ENCODE measurements at regions of chr6 and their contacts with region 1.

Region 1: GRCh38 chr6:87701676-87702588 is at the start of gene AKIRIN2:
- DNase-seq: peak; percentile 93 to 99 (median 98)
- H3K4me3 ChIP-seq: peak within 1 kb of the TSS; percentile 82
- H3K4me3 Mint-ChIP-seq: peak within 1 kb of the TSS; percentile 93 to 99 (median 97)
- H3K27ac ChIP-seq: peak within 1 kb of the TSS; percentile 91
- H3K27ac Mint-ChIP-seq: peak within 1 kb of the TSS; percentile 88 to 98 (median 96)
- H3K4me1 ChIP-seq: peaks cover 11% of the 10 kb centered on the region
- H3K4me1 Mint-ChIP-seq: peaks cover 45 to 56% (median 54%) of the 10 kb centered on the region in 3 donors
- H3K27me3 ChIP-seq: no peaks in the 10 kb centered on the region
- H3K27me3 Mint-ChIP-seq: peaks cover 0 to 4% of the 10 kb centered on the region in 2 donors
- total RNA-seq, gene AKIRIN2: 47.3 to 49.3 TPM

Region 2: DNA sequence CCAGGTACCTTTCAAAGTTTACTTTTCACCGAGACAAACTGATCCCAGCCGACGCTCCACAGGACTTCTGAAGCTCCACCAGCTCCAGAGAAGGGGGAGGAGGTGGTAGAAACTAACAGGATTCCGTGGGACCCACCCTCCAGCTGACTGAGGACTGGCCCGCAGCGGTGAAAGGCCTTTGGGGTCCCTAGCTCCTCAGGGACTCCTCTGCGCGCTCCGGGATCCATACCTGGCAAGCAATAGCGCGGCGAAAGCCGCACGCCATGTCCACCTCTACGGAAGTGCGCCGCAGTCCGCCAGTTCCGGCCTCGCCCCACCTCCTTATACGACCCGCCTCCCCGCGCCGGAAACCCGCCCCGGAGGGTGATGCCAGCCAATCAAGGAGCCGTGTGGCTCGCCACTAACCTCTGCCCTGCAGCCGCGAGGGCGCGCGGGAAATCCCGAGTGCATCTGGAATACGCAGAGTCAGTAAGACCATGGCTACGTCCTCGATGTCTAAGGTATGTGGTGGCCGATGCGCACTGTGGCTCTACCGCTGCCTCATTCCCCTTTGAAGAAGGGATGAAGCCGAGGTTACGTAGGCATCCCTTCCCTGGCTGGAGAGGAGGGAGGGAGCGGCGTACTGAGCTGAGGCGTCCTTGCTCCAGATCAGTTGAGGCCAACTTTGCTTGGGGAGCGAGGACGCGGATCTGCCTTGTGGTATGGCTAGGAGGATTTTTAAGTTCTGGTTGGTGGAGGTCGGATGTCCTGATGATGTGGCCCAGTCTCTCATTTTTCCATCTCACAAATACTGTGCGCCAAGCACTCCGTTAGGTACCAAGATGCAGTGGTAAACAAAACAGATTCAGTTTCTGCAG is 112.0 kb before region 1 on chr6 and contains the starts of genes ORC3 and RARS2:
- CTCF ChIA-PET with region 1: interaction called, 3 read pairs
- POLR2A ChIA-PET with region 1: interaction called, 21 read pairs
- DNase-seq: peak; percentile 90 to 95 (median 93)
- H3K4me3 ChIP-seq: peak within 1 kb of the TSS; percentile 98
- H3K4me3 Mint-ChIP-seq: peak within 1 kb of the TSS; percentile 87 to 98 (median 92)
- H3K27ac ChIP-seq: peak within 1 kb of the TSS; percentile 90
- H3K27ac Mint-ChIP-seq: peak within 1 kb of the TSS; percentile 80 to 99 (median 94)
- H3K4me1 ChIP-seq: peaks cover 39% of the 10 kb centered on the region
- H3K4me1 Mint-ChIP-seq: peaks cover 57 to 82% (median 77%) of the 10 kb centered on the region in 3 donors
- H3K27me3 ChIP-seq: no peaks in the 10 kb centered on the region
- H3K27me3 Mint-ChIP-seq: no peaks in the 10 kb centered on the region
- total RNA-seq, gene ORC3: 31.1 to 33.5 TPM
- total RNA-seq, gene RARS2: 19.2 to 20.6 TPM

Region 3: DNA sequence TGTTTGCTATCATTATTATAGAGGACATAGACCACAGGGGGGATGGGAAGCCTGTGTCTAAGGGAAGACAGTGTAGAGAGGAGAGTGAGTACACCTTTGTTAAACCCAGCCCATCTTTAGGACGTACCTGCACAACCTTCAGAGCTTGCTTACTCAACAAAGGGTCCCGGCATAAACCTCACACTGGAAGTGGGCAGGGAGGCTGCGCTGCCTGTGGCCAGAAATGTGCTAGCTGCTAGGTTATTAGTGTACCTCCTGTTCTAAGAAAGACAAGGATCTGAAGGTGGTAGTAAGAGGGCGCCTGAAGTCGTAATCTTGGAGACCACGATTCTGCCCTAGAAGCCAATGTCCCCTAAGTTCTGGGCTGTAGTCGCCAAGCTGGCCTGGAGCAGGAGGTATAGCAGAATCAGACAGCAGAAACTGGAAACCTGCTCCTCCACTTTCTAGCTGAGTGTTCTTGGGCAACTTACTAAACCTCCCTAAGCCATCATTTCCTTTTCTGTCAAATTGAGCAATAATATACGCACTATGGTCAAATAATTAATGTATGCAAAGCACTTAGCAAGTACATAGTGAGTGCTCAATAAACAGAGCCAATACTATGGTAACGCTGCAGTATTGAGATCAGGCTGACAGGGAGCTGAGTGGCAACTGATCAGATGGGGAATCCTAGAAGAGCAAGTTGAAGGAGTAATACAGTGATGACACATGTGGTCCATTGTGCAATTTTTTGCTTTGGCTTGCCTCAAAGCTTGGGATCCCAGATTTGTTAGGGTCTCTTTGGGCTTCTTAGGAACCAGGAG is 16.9 kb after region 1 on chr6:
- CTCF ChIA-PET with region 1: interaction called, 6 read pairs
- POLR2A ChIA-PET with region 1: interaction called, 15 read pairs
- DNase-seq: no peak
- H3K4me3 ChIP-seq: no peak overlapping the region
- H3K4me3 Mint-ChIP-seq: peak overlapping the region in 6 of 7 donors; percentile 20 to 78 (median 54)
- H3K27ac ChIP-seq: no peak overlapping the region
- H3K27ac Mint-ChIP-seq: peak overlapping the region; percentile 17 to 90 (median 83)
- H3K4me1 ChIP-seq: peaks cover 12% of the 10 kb centered on the region
- H3K4me1 Mint-ChIP-seq: peaks cover 31 to 47% (median 46%) of the 10 kb centered on the region in 3 donors
- H3K27me3 ChIP-seq: no peaks in the 10 kb centered on the region
- H3K27me3 Mint-ChIP-seq: no peaks in the 10 kb centered on the region

Region 4: GRCh38 chr6:87742106-87742505 is 40.2 kb after region 1 on chr6:
- CTCF ChIA-PET with region 1: interaction called, 4 read pairs
- POLR2A ChIA-PET with region 1: interaction called, 17 read pairs
- DNase-seq: peak; percentile 11 to 82 (median 50)
- H3K4me3 ChIP-seq: no peak overlapping the region
- H3K4me3 Mint-ChIP-seq: peak overlapping the region in 5 of 7 donors; percentile 2 to 50 (median 42)
- H3K27ac ChIP-seq: no peak overlapping the region
- H3K27ac Mint-ChIP-seq: peak overlapping the region; percentile 76 to 94 (median 92)
- H3K4me1 ChIP-seq: peaks cover 22% of the 10 kb centered on the region
- H3K4me1 Mint-ChIP-seq: peaks cover 42 to 54% (median 52%) of the 10 kb centered on the region in 3 donors
- H3K27me3 ChIP-seq: no peaks in the 10 kb centered on the region
- H3K27me3 Mint-ChIP-seq: no peaks in the 10 kb centered on the region

Region 5: DNA sequence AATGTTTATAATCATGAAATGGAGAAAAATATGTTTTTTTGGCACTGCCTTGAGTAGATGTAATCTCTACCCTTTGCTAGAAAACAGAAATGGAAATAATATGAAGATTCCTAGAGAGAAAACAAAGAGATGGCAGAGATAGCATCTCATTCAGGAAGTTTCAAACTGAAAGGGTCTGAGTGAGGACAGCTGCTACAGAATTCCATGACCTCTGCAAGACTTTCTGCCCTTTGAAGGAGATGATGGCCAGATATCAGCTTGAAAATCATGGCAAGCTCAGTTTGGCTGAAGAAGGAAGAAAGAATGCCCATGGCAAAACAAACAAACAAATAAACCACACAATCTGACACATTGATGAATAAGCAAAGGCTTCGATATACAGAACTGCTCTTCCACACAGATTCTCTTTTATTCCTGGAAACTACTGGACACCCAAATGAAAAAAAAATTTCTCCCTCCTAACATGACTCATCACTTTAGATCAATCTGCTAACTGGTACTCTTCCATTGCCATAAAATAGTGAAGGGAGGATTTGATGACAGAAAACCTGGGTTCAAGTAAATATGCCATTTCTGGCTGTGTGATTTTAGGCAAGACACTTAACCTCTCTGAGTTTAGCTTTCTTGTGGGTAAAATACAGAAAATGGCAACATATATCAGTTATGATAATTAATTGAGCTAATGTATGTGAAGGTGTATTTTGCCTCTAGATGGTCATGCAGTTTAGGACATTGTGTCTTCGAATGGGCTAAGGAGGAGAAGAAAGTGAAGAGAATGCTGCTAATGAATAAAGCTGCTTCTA is 239.8 kb after region 1 on chr6:
- CTCF ChIA-PET with region 1: no interaction called
- POLR2A ChIA-PET with region 1: no interaction called
- DNase-seq: no peak
- H3K4me3 ChIP-seq: no peak overlapping the region
- H3K4me3 Mint-ChIP-seq: no peak overlapping the region
- H3K27ac ChIP-seq: no peak overlapping the region
- H3K27ac Mint-ChIP-seq: no peak overlapping the region
- H3K4me1 ChIP-seq: no peaks in the 10 kb centered on the region
- H3K4me1 Mint-ChIP-seq: peaks cover 0 to 4% (median 0%) of the 10 kb centered on the region in 3 donors
- H3K27me3 ChIP-seq: no peaks in the 10 kb centered on the region
- H3K27me3 Mint-ChIP-seq: peaks cover 12 to 29% of the 10 kb centered on the region in 2 donors